Naive thymus-derived CD4-positive, alpha-beta T cell (primary cell): ENCODE measurements at regions of chr10 and their contacts with region 1.

Region 1: DNA sequence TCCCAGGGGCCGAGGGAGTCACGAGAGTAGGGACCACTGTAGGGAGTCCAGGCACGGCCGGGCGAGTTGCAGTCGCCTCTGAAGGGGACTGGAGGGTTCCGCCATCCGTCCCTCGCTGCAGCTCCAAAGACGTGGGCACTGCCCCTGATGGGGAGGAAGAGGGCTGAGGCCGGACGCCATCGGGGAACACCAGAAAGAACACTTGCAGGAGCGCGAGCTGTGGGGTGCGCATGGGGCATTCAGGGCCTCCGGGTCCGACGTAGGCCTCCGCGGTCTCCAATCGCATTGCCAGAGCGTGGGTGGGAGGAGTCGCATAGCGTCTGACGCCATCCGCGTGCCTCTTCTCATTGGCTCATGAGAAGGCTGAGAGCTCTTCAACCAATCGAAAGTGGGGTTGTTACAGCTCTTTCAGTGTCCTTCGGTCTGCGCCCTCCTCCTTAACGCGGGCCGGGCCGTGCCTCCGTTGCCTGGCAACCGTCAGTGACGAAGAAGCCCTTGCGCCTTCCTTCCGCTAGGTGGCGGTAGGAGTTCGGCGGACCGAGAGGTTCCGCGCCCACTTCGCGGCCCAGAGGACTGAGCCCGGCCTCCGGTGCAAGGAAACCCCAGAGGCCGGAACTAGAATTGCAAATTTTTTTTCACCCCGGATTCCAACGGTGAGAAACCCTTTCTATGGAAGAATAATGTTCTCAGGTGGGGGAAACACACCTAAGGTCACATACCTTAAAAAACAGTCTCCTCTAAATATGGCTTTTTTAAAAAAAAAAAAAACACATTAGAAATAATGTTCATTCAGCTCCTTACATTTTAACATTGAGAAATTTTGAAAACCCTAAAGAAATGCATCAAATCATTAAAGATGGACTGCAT is at the start of gene TCTN3:
- DNase-seq: peak; percentile 85 to 98 (median 97)
- ATAC-seq: peak; percentile 98
- H3K4me3 ChIP-seq: peak within 1 kb of the TSS; percentile 93
- H3K4me3 Mint-ChIP-seq: peak within 1 kb of the TSS; percentile 89 to 99 (median 96)
- H3K27ac ChIP-seq: peak within 1 kb of the TSS; percentile 95
- H3K27ac Mint-ChIP-seq: peak within 1 kb of the TSS; percentile 91 to 98 (median 96)
- H3K4me1 ChIP-seq: peaks cover 11 to 15% of the 10 kb centered on the region in 2 donors
- H3K4me1 Mint-ChIP-seq: peaks cover 27 to 51% (median 42%) of the 10 kb centered on the region in 7 donors
- H3K27me3 ChIP-seq: no peaks in the 10 kb centered on the region
- H3K27me3 Mint-ChIP-seq: peaks cover 0 to 9% (median 2%) of the 10 kb centered on the region in 5 donors
- total RNA-seq, gene TCTN3: 16.2 to 38.3 (median 22.2) TPM

Region 2: DNA sequence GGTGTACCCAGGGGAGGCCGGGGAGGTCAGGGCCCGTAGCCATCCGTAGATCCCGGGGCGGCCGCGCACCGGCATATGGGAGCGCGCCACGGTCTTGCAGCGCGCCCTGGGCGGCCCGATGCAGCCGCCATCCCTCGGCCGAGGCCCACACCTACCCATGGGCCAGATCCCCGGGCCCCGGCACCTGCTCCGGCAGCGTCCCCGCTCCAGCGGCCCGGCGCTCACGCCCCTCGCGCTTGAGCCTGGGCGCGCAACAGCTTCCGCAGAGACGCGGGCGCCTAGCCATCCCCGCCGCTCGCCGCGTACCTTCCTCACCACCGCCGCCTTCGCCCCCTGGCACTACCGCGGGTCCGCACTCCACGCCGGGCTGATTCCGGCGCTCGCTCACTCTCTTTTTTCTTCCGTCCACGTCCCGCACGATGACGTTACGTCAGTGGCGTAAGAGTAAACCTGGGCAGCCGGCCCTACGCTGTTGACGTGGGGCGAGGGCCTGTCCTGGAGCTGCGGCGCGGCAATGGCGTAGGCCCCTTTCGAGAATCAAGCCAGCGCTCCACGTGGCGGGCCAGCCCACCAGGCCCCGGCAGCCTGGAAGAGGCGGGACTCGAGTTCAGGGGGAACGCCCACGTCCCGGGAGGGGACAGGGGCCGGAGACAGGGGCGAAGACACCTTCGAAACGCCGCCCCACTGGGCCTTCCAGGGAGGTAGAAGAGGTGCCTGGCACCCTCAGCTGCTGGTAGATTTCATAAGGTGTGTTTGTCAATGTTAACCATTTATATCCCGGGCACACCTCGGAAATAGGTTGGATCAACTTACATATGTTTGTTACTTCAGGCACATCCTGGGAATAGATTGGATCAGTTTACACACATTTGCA is 37.4 kb before region 1 on chr10 and contains the start of gene ALDH18A1:
- CTCF ChIA-PET with region 1: interaction called, 12 read pairs
- POLR2A ChIA-PET with region 1: interaction called, 6 read pairs
- intact Hi-C with region 1: loop called (anchors 1 kb)
- DNase-seq: peak; percentile 78 to 95 (median 88)
- ATAC-seq: peak; percentile 95
- H3K4me3 ChIP-seq: peak within 1 kb of the TSS; percentile 78
- H3K4me3 Mint-ChIP-seq: peak within 1 kb of the TSS; percentile 98 to 100 (median 99)
- H3K27ac ChIP-seq: peak within 1 kb of the TSS; percentile 72
- H3K27ac Mint-ChIP-seq: peak within 1 kb of the TSS; percentile 82 to 97 (median 93)
- H3K4me1 ChIP-seq: peaks cover 7 to 13% of the 10 kb centered on the region in 2 donors
- H3K4me1 Mint-ChIP-seq: peaks cover 7 to 40% (median 27%) of the 10 kb centered on the region in 7 donors
- H3K27me3 ChIP-seq: no peaks in the 10 kb centered on the region
- H3K27me3 Mint-ChIP-seq: peaks cover 0 to 3% (median 0%) of the 10 kb centered on the region in 5 donors
- total RNA-seq, gene ALDH18A1: 15.0 to 73.8 (median 26.0) TPM

Region 3: DNA sequence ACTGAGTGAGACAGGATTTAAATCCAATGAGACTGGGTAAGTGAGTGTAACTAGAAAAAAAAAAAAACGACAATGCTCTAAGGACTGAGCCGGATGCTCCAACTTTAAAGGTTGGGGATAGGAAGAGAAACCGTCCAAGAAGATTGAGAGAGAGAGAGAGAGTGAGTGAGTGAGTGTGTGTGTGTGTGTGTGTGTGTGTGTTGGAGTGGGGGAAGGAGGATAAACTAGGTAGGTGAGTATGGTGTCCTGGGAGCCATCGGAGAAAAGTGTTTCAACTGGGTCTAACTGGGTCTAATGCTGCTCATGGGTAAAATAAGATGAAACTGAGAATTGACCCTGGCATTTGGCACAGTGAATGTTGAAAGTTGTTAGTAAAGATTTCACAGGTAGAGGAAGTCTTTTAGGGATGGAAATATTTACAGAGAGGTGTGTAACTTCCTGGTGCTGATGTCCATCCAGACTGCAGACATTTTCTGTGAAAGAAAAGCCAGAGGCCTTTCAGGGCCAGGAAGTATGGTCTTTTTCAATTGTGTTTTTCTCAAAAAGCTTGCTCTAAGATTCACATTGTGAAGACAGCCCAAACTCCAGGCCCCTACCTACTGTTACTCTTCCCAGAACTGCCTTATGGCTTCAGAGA is 76.3 kb after region 1 on chr10:
- CTCF ChIA-PET with region 1: no interaction called
- POLR2A ChIA-PET with region 1: no interaction called
- intact Hi-C with region 1: no loop called
- DNase-seq: no peak
- ATAC-seq: no peak
- H3K4me3 ChIP-seq: no peak overlapping the region
- H3K4me3 Mint-ChIP-seq: no peak overlapping the region
- H3K27ac ChIP-seq: no peak overlapping the region
- H3K27ac Mint-ChIP-seq: peak overlapping the region in 2 of 9 donors; percentile 26 to 49
- H3K4me1 ChIP-seq: no peaks in the 10 kb centered on the region
- H3K4me1 Mint-ChIP-seq: peaks cover 0 to 15% (median 0%) of the 10 kb centered on the region in 7 donors
- H3K27me3 ChIP-seq: no peaks in the 10 kb centered on the region
- H3K27me3 Mint-ChIP-seq: peaks cover 0 to 13% (median 8%) of the 10 kb centered on the region in 5 donors

Region 4: GRCh38 chr10:95832216-95833041 is 138.5 kb after region 1 on chr10:
- CTCF ChIA-PET with region 1: interaction called, 4 read pairs
- POLR2A ChIA-PET with region 1: no interaction called
- intact Hi-C with region 1: loop called in 1 of 2 experiments (anchors 1 kb)
- DNase-seq: peak in 1 of 9 donors; percentile 48
- ATAC-seq: peak; percentile 90
- H3K4me3 ChIP-seq: no peak overlapping the region
- H3K4me3 Mint-ChIP-seq: peak overlapping the region in 1 of 10 donors; percentile 88
- H3K27ac ChIP-seq: no peak overlapping the region
- H3K27ac Mint-ChIP-seq: peak overlapping the region in 1 of 9 donors; percentile 98
- H3K4me1 ChIP-seq: peaks cover 0 to 17% of the 10 kb centered on the region in 2 donors
- H3K4me1 Mint-ChIP-seq: peaks cover 0 to 58% (median 0%) of the 10 kb centered on the region in 7 donors
- H3K27me3 ChIP-seq: no peaks in the 10 kb centered on the region
- H3K27me3 Mint-ChIP-seq: no peaks in the 10 kb centered on the region

Region 5: DNA sequence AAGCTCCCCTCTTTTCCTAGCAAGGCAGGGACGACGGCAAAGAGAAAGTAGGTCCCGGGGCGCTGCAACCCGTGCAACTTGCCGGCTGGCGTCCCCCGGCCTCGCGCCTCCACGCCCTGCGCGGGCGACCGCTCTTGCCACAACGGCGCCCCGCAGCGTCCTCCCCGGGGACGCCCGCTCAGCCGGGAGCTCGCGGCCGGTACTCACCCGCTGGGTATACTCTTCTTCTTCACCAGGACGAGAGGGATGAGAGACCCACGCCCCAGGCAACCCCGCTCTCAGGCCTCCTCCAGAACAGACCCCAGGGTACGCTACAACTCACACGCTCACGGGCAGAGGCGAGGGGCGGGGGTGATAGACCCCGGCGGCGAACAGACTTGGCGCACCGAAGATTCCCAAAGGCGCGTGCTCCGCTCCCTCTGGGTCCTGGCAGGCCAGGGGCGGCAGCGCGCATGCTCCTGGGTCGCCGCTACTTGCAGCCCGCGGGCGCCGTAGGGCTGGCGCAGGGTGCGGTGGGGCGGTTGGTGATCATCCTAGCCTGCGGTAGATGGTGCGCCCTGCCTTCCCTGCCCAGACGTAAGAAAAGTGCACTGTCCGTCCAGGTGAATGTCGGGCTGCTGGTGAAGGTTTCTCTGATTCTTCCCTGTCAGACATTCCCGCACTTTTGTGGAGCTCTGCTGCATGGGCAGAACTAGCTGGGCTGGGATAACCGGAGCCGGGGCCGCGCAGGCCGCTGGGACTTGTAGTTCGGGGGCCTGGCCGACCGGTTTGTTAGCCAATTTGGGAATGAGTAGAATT is 213.8 kb after region 1 on chr10 and contains the start of gene CC2D2B:
- CTCF ChIA-PET with region 1: interaction called, 4 read pairs
- POLR2A ChIA-PET with region 1: no interaction called
- intact Hi-C with region 1: loop called (anchors 1 kb)
- DNase-seq: peak; percentile 26 to 78 (median 53)
- ATAC-seq: peak; percentile 84
- H3K4me3 ChIP-seq: peak within 1 kb of the TSS; percentile 62
- H3K4me3 Mint-ChIP-seq: peak within 1 kb of the TSS; percentile 92 to 95 (median 94)
- H3K27ac ChIP-seq: peak within 1 kb of the TSS; percentile 65
- H3K27ac Mint-ChIP-seq: peak within 1 kb of the TSS; percentile 29 to 92 (median 89)
- H3K4me1 ChIP-seq: no peaks in the 10 kb centered on the region
- H3K4me1 Mint-ChIP-seq: peaks cover 11 to 20% (median 18%) of the 10 kb centered on the region in 7 donors
- H3K27me3 ChIP-seq: no peaks in the 10 kb centered on the region
- H3K27me3 Mint-ChIP-seq: peaks cover 0 to 20% (median 0%) of the 10 kb centered on the region in 5 donors
- total RNA-seq, gene CC2D2B: 0.64 to 0.99 TPM in 2 of 5 experiments, not detected in the others

Region 6: DNA sequence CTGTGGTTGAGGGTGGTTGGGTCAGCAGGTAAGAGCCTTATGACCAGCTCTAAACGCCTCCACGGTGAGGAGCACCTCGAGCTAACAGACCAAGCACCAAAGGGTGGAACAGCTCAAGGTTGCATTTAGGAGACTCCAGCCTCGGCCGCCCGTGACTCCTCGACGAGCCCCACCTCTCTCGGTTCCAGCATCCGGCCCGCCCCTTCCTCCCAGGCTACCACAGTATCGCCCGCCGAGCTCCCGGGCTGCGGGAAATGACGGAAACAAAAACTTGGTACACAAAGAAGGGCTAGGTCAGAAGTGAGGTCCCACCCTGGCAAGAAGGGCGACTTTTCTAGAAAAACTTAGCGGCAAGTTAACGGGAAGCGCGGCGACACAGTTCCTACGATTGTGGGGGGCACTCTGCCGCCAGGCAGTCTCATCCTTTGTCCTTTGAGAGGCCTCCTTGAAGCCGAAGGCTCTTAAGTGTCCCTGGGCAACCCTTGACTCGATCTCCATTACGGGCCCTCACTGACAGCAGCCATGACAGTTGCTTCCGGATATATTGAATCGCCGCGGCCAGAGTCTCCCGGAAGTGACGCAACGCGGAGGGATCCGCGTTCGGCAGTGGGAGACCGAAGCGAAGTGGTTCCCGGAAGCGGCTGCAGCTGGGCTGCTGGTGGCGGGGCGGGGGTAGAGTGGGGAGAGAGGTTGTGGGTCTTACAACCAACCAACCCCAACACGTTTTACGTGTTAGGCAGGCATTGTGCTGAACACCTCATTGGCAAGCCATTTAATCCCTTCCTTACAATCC is 396.0 kb after region 1 on chr10:
- CTCF ChIA-PET with region 1: no interaction called
- POLR2A ChIA-PET with region 1: interaction called, 4 read pairs
- intact Hi-C with region 1: loop called in 1 of 2 experiments (anchors 1 kb)
- DNase-seq: peak; percentile 87 to 94 (median 92)
- ATAC-seq: peak; percentile 94
- H3K4me3 ChIP-seq: peak overlapping the region; percentile 99
- H3K4me3 Mint-ChIP-seq: peak overlapping the region; percentile 87 to 98 (median 94)
- H3K27ac ChIP-seq: peak overlapping the region; percentile 93
- H3K27ac Mint-ChIP-seq: peak overlapping the region; percentile 96 to 99 (median 99)
- H3K4me1 ChIP-seq: peaks cover 4 to 8% of the 10 kb centered on the region in 2 donors
- H3K4me1 Mint-ChIP-seq: peaks cover 0 to 15% (median 14%) of the 10 kb centered on the region in 7 donors
- H3K27me3 ChIP-seq: peaks cover 3 to 4% of the 10 kb centered on the region in 2 donors
- H3K27me3 Mint-ChIP-seq: peaks cover 29 to 36% (median 30%) of the 10 kb centered on the region in 5 donors

Region 7: DNA sequence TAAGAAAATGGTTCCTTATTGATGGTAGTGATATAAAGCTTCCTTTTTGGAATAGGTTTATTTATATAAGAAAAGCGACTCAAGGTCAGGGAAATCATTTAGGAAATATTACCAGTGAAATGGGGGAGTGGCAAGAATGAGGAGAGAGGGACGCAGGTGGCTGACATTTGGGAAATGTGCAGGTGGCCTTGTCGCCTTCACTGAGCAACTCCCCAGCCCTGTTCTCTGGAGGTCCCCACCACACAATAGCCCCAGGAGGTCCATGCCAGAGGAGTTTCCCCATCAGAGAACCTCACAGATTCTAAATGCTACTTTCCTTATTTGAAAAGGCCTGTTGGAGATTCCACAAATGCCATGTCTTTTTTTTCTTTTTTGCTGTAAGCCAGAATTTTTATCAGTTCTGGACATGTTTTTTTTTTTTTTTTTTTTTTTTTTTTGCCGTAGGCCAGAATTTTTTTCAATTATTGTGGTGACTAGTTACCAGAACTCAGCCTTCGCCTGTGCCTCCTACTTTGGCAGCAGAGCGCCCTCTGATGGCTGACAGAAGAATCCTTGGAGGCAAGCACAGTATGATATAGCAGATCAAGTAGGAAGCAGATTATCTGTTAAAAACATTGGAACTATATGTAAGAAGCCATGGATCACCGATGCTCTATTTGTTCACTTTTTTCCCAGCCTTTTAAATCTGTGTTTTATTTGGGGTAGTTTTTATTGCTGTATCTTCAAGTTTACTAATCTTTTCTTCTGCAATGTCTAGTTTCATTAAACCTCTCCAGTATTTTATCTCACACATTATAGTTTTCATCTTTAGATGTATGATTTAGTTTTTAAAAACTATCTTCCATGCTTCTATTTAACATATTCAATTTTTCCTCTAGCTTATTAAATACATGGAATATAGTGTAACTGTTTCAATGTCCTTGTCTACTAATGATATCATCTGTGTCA is 646.3 kb after region 1 on chr10:
- CTCF ChIA-PET with region 1: no interaction called
- POLR2A ChIA-PET with region 1: no interaction called
- intact Hi-C with region 1: loop called in 1 of 2 experiments (anchors 1 kb)
- DNase-seq: peak in 8 of 9 donors; percentile 32 to 73 (median 66)
- ATAC-seq: peak; percentile 88
- H3K4me3 ChIP-seq: no peak overlapping the region
- H3K4me3 Mint-ChIP-seq: peak overlapping the region in 1 of 10 donors; percentile 20
- H3K27ac ChIP-seq: no peak overlapping the region
- H3K27ac Mint-ChIP-seq: peak overlapping the region in 2 of 9 donors; percentile 8 to 53
- H3K4me1 ChIP-seq: no peaks in the 10 kb centered on the region
- H3K4me1 Mint-ChIP-seq: peaks cover 0 to 11% (median 2%) of the 10 kb centered on the region in 7 donors
- H3K27me3 ChIP-seq: no peaks in the 10 kb centered on the region
- H3K27me3 Mint-ChIP-seq: peaks cover 0 to 10% (median 0%) of the 10 kb centered on the region in 5 donors